ENCODE measurements at regions of chr13 and their contacts with region 1.

Region 1: DNA sequence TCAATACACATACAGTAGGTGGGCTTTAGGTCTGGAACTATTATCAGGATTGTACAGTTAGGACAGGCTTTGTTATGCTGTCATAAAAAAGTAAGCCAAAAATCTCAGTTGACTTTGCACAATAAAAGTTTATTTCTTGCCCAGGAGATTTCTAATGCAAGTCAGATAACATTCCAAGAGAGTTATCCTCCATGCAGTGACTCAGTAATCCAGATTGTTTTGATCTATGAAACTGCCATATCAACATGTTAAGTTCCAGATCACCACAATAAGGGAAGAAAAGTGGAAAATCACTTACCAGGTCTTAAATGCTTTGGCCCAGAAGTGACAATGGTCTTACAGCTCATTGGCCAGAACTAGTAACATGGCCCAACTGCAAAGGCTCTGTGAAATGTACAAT is 636.2 kb upstream of the KLF12 start:
- ATAC-seq: peak in 2 of 8 experiments; percentile 31 to 65
- H3K4me3 ChIP-seq: no peak overlapping the region
- H3K27ac ChIP-seq: no peak overlapping the region
- H3K4me1 ChIP-seq: no peaks in the 10 kb centered on the region

Region 2: GRCh38 chr13:74434782-74435181 is 335.6 kb before region 1 on chr13:
- in situ Hi-C with region 1: no loop called
- ATAC-seq: no peak
- H3K4me3 ChIP-seq: no peak overlapping the region
- H3K27ac ChIP-seq: no peak overlapping the region
- H3K4me1 ChIP-seq: no peaks in the 10 kb centered on the region

Region 3: DNA sequence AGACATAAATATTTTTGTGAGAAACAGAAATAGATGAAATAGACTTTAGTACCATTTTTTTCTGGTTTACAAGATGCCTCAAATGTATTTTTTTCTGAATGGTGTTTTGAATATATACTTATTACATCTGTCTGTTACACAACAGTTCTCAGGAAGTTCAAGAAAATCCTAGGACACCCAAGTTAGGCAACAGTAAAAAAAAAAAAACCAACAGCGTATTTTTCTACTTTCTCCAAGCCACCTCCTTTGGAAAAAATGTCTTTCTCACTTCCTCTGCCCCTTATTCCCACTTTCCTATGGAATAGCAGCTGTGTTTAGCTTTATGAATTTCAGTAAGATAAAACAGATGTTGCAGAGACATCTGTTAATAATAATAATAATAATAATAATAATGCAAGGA is 146.6 kb before region 1 on chr13:
- in situ Hi-C with region 1: no loop called
- ATAC-seq: no peak
- H3K4me3 ChIP-seq: no peak overlapping the region
- H3K27ac ChIP-seq: no peak overlapping the region
- H3K4me1 ChIP-seq: no peaks in the 10 kb centered on the region

Region 4: GRCh38 chr13:74662905-74663304 is 107.5 kb before region 1 on chr13:
- in situ Hi-C with region 1: loop called in 1 of 9 experiments (anchors 25 kb)
- ATAC-seq: no peak
- H3K4me3 ChIP-seq: no peak overlapping the region
- H3K27ac ChIP-seq: no peak overlapping the region
- H3K4me1 ChIP-seq: peaks cover 0 to 2% of the 10 kb centered on the region in 2 donors

Measured in motor neuron (in vitro differentiated cells).